A673 (cell line): ENCODE measurements at regions of chr2 and their contacts with region 1.

Region 1: DNA sequence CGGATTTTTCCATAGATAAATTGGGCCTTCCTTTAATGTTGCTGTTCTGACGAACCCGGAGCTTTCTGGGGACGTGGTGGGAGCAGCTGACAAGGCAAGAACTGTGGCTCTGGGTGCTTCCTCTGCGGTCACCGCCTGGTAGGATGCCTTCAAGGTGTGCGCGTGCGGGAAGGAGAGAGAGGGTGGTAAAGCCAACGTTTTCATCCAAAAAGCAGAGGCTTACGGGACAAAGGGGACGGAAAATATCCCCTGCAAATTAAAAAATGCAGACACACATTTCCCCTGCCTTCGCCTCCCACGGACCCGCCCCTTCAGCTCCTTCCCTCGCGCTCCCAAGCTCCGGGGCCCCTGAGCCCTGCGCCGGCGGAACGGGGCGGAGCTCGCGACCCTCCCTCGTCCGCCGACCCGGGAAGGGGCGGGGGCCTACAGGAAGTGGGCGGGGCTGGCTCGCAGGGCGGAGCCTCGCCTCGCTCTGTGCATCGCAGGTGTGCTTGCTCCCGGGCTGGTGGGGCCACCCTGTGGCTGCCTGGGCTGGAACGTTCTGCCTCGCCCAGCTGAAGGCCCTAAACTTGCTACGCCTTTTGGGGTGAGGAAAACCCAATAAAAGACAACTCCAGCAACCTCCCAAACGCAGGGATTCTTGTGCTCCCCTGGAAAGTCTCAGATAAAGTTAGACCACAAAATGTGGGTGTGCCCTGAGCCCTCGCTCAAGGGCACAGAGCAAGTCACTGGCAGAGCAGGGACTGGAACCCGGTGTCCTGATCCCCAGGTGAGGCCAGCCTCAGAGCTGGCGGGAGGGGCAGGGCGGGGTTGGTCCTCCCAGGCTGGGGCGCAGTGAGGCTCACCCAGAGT is 25.4 kb upstream of the SLC66A3 start:
- DNase-seq: peak; percentile 71
- H3K4me3 ChIP-seq: peak overlapping the region; percentile 34
- H3K27ac ChIP-seq: no peak overlapping the region
- H3K4me1 ChIP-seq: peaks cover 14% of the 10 kb centered on the region
- H3K27me3 ChIP-seq: no peaks in the 10 kb centered on the region
- CTCF ChIP-seq: peak; percentile 55

Region 2: DNA sequence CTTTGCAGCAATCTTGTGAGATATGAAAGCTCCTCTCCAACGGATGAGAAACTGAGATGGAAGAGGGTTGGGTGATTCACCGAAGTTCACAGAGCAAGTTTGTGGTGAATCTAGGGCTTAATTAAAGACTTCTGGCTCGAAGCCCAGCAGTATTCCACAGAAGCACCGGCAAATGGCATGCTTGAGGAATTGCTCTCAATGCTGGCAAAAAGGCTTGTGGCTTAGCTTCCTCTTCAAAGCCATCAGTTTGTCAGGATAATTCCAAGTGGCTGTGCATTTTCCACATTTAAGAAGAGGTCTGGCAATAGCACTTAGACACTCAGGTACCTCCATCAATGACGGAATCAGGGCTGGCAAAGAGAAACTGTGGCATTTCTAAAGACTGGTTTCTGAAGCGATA is 73.2 kb before region 1 on chr2:
- CTCF ChIA-PET with region 1: no interaction called
- POLR2A ChIA-PET with region 1: no interaction called
- intact Hi-C with region 1: no loop called
- DNase-seq: peak; percentile 55
- H3K4me3 ChIP-seq: no peak overlapping the region
- H3K27ac ChIP-seq: no peak overlapping the region
- H3K4me1 ChIP-seq: peaks cover 3% of the 10 kb centered on the region
- H3K27me3 ChIP-seq: peaks cover 15% of the 10 kb centered on the region
- CTCF ChIP-seq: no peak

Region 3: DNA sequence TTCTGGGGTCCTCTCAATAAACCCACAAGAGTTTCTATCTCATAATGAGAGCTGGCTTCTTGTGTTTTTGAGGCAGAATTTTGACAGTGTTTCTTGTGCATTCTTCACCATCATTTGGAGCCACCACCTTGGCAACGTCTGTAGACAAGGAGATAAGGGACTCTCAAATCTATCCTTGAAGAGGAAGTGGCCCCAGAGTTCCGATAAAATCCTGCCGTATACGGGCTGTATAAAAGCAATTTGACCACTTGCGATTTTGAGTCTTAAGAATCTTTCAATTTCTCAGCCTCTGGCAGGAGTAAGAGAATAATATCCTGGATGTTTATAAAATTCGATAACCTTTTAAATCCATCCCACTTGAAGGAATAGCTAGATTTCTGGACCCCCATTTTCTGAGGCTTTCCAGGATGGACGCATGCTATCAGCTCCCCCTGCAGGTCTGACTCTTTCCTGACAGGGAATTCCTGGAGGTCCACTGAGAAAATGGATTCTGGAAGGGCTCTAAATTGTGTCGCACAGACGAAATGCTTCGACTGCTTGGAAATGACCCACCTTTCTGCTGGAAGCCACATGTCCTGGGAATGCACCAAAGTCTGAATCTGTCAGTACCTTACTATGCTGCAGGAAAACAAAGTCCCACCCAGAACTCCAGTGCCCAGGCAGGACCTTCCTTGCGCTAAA is 282.1 kb after region 1 on chr2:
- CTCF ChIA-PET with region 1: interaction called, 28 read pairs
- POLR2A ChIA-PET with region 1: no interaction called
- intact Hi-C with region 1: loop called (anchors 1 kb)
- DNase-seq: peak; percentile 76
- H3K4me3 ChIP-seq: peak overlapping the region; percentile 32
- H3K27ac ChIP-seq: no peak overlapping the region
- H3K4me1 ChIP-seq: no peaks in the 10 kb centered on the region
- H3K27me3 ChIP-seq: no peaks in the 10 kb centered on the region
- CTCF ChIP-seq: peak; percentile 86

Region 4: GRCh38 chr2:11430729-11431128 is 300.9 kb after region 1 on chr2:
- CTCF ChIA-PET with region 1: interaction called, 10 read pairs
- POLR2A ChIA-PET with region 1: no interaction called
- intact Hi-C with region 1: no loop called
- DNase-seq: no peak
- H3K4me3 ChIP-seq: no peak overlapping the region
- H3K27ac ChIP-seq: no peak overlapping the region
- H3K4me1 ChIP-seq: no peaks in the 10 kb centered on the region
- H3K27me3 ChIP-seq: no peaks in the 10 kb centered on the region
- CTCF ChIP-seq: no peak

Region 5: DNA sequence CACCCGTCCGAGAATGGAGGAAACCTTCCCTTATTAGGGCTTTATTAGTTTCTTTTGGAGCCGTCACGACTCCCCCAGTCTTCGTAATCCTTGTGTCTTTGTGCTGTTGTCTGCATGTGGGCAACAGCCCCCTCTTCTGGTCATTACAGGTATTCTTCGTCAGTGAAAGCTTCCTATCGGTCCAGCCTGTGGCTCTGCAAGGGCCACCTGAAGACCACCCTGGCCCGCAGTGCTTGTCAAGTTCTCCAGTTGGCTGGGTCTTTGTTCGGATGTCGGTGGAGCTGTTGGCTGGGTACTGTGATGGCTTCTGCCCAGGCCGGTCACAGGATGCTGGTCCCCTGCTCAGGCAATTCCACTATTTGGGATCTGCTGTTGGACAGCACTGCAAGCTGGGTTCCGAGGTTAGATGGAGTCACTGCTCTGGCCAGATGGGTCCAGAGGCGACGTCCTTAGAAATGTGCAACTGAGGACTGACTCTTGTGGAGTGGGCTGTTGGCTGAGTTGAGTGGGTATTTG is 317.0 kb after region 1 on chr2:
- CTCF ChIA-PET with region 1: interaction called, 23 read pairs
- POLR2A ChIA-PET with region 1: no interaction called
- intact Hi-C with region 1: loop called (anchors 1 kb)
- DNase-seq: peak; percentile 80
- H3K4me3 ChIP-seq: no peak overlapping the region
- H3K27ac ChIP-seq: no peak overlapping the region
- H3K4me1 ChIP-seq: no peaks in the 10 kb centered on the region
- H3K27me3 ChIP-seq: no peaks in the 10 kb centered on the region
- CTCF ChIP-seq: peak; percentile 90

Region 6: DNA sequence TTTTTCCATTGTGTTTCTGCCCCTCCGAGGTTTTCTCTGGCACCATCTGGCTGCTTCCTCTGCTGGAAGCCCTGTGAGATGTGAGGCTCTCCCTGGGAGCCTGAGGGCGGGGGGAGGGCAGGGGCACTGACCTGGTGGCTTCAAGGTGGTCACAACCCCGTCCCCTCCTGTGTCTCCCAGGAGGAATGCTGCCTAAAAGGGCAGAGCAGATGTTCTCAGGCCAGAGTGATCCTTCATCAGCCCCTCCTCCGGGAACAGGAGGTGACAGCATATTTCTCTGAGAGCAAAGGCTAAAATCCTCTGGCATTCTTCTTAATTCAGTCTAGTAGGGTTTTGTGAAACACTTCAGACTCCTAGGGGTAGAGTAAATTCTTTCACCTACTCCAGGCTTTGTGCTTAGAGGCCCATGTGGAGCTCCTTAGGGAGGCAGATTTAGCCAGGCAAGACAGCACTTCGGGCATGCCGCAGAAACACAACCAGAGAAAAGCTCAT is 385.7 kb after region 1 on chr2:
- CTCF ChIA-PET with region 1: no interaction called
- POLR2A ChIA-PET with region 1: no interaction called
- intact Hi-C with region 1: no loop called
- DNase-seq: no peak
- H3K4me3 ChIP-seq: no peak overlapping the region
- H3K27ac ChIP-seq: no peak overlapping the region
- H3K4me1 ChIP-seq: no peaks in the 10 kb centered on the region
- H3K27me3 ChIP-seq: no peaks in the 10 kb centered on the region
- CTCF ChIP-seq: no peak

Region 7: GRCh38 chr2:11583840-11584524 is 454.2 kb after region 1 on chr2:
- CTCF ChIA-PET with region 1: interaction called, 33 read pairs
- POLR2A ChIA-PET with region 1: no interaction called
- intact Hi-C with region 1: loop called (anchors 1 kb)
- DNase-seq: peak; percentile 93
- H3K4me3 ChIP-seq: no peak overlapping the region
- H3K27ac ChIP-seq: no peak overlapping the region
- H3K4me1 ChIP-seq: peaks cover 13% of the 10 kb centered on the region
- H3K27me3 ChIP-seq: no peaks in the 10 kb centered on the region
- CTCF ChIP-seq: peak; percentile 94

Region 8: GRCh38 chr2:11688222-11689069 is 558.6 kb after region 1 on chr2:
- CTCF ChIA-PET with region 1: interaction called, 4 read pairs
- POLR2A ChIA-PET with region 1: no interaction called
- intact Hi-C with region 1: loop called (anchors 5 kb)
- DNase-seq: peak; percentile 90
- H3K4me3 ChIP-seq: peak overlapping the region; percentile 25
- H3K27ac ChIP-seq: no peak overlapping the region
- H3K4me1 ChIP-seq: peaks cover 6% of the 10 kb centered on the region
- H3K27me3 ChIP-seq: peaks cover 14% of the 10 kb centered on the region
- CTCF ChIP-seq: peak; percentile 97

Region 9: GRCh38 chr2:12005886-12006681 is 876.3 kb after region 1 on chr2:
- CTCF ChIA-PET with region 1: no interaction called
- POLR2A ChIA-PET with region 1: no interaction called
- intact Hi-C with region 1: no loop called
- DNase-seq: peak; percentile 75
- H3K4me3 ChIP-seq: no peak overlapping the region
- H3K27ac ChIP-seq: no peak overlapping the region
- H3K4me1 ChIP-seq: peaks cover 20% of the 10 kb centered on the region
- H3K27me3 ChIP-seq: no peaks in the 10 kb centered on the region
- CTCF ChIP-seq: no peak